ENCODE measurements at regions of chr14 and their contacts with region 1.

Region 1: DNA sequence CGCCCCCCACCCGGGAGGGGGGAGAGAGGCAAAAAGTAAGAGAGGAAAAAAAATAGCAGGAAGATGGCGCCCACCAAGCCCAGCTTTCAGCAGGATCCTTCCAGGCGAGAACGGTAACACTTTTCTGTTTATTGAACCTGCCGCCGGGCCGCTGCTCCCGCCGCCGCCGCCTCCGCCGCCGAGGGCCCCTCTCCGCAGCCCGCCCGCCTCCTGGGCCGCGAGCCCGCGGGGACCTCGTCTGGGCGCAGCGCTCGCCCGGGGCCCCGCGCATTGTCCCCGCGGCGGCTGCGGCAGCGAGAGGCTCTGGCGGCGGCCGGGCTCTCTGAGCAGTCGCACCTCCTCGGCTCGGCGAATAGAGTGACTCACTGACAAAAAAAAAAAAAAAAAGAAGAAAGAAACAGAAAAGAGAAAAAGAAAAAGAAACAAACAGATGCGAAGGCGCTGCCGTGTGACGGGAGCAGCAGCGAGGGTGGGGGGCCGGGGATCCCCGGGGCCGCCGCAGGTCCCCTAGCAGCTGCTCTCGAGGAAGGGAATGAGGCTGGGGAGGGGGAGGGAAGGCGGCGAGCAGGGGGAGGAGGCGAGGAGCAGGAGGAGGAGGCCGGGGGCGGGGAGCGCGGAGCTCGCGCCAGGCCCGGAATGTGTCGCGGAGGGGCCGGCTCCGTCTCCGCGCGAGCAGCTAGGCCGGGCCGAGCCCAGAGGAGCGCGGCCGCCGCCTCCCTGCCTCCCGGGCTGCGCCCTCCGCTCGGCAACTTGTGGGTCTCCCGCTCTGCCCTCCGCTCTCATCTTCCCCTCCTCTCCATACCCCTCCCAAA is 781 bp downstream of the NPAS3 start:
- DNase-seq: peak; percentile 38 to 86 (median 72)
- H3K4me3 ChIP-seq: peak overlapping the region; percentile 24 to 79 (median 68)
- H3K27ac ChIP-seq: peak overlapping the region; percentile 70 to 98 (median 93)
- H3K27me3 ChIP-seq: peaks cover 0 to 4% (median 0%) of the 10 kb centered on the region in 45 donors
- CTCF ChIP-seq: peak in 6 of 56 donors; percentile 10 to 28 (median 18)

Region 2: DNA sequence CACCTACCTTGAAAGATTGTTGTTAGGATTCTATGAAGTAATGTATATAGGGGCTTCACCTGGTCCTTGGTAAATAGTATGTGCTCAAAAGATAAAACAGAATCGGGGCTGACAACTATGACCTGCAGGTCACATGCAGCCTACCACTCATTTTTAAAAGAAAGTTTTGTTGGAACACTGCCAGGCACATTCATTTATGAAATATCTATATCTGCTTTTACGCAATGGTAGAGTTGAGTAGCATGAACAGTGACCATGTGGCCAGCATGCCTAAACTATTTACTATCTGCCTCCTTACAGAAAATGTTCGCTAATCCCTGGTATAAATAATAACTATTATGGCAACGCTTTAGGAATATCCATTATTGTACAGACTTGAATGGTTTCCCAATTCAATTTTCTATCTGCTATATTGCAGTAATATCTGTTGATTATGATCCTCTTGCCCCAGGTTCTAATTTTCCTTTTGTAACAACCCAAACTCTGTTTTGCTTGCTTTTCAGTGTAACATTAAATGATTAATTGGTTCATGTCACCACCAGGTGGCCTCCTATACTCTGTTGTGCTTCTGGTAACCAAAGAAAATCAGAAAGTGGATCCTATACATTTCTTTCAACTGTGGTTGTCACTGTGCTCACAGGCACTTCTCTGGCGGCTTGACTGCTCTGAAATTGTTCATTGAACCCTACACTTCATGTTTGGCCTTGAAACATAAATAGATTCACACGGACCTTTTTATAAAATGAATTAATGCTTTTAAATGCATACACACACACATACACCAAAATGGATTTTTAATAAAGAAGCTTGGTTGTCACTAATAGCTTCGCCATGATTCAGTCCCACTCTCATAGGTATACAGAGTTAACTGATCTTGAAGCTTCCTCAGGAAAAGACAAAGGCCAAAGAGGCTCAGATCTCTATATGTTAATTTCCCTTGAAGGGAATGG is 228.5 kb before region 1 on chr14:
- intact Hi-C with region 1: loop called (anchors 2 to 5 kb)
- DNase-seq: peak in 3 of 10 donors; percentile 25 to 62 (median 40)
- H3K4me3 ChIP-seq: peak overlapping the region in 50 of 59 donors; percentile 0 to 56 (median 28)
- H3K27ac ChIP-seq: peak overlapping the region in 58 of 59 donors; percentile 5 to 91 (median 80)
- H3K27me3 ChIP-seq: no peaks in the 10 kb centered on the region
- CTCF ChIP-seq: peak; percentile 54 to 88 (median 72)

Region 3: DNA sequence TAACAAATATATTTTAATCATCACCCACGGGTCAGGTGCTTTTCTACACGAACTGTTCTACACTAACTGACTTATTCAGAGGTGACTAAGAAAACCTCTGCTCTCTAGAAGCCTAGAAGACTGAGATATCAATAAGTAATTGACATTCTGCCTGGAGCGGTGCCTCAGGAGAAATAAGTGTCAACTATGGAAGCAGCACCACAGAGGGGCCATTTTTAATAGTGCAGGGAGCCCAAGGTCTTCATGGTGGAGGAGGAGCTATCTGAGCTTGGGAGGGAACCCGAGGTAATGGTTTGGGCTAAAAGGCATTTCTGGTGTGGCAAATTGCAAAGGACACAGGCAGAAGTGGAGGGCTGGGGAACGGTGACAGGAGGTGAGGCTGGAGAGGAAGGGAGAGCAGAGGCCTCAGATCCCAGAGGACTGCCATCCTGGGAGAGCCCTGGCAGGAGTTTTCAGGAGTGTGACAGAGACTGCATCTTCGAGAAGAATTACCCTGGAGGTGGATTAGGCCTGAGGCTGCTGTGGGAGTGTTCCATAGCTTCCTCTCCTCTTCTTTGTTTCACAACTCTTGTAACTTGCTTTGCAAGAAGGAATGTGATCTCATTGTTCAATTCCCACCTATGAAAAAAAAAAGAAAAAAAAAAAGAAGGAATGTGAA is 122.3 kb after region 1 on chr14:
- intact Hi-C with region 1: loop called in 1 of 2 experiments (anchors 10 kb)
- DNase-seq: no peak
- H3K4me3 ChIP-seq: no peak overlapping the region
- H3K27ac ChIP-seq: peak overlapping the region in 1 of 59 donors; percentile 9
- H3K27me3 ChIP-seq: no peaks in the 10 kb centered on the region
- CTCF ChIP-seq: peak in 11 of 56 donors; percentile 5 to 44 (median 22)

Region 4: GRCh38 chr14:33150666-33151428 is 211.4 kb after region 1 on chr14:
- intact Hi-C with region 1: no loop called
- DNase-seq: no peak
- H3K4me3 ChIP-seq: no peak overlapping the region
- H3K27ac ChIP-seq: peak overlapping the region in 3 of 59 donors; percentile 2 to 37 (median 24)
- H3K27me3 ChIP-seq: no peaks in the 10 kb centered on the region
- CTCF ChIP-seq: no peak

Region 5: GRCh38 chr14:33432407-33433023 is 493.1 kb after region 1 on chr14:
- intact Hi-C with region 1: loop called in 1 of 2 experiments (anchors 10 kb)
- DNase-seq: peak in 2 of 10 donors; percentile 42 to 49
- H3K4me3 ChIP-seq: no peak overlapping the region
- H3K27ac ChIP-seq: no peak overlapping the region
- H3K27me3 ChIP-seq: no peaks in the 10 kb centered on the region
- CTCF ChIP-seq: peak in 54 of 56 donors; percentile 5 to 74 (median 54)

Measured in dorsolateral prefrontal cortex (tissue), 120 donors.